ENCODE measurements at regions of chr12 and their contacts with region 1.

Region 1: DNA sequence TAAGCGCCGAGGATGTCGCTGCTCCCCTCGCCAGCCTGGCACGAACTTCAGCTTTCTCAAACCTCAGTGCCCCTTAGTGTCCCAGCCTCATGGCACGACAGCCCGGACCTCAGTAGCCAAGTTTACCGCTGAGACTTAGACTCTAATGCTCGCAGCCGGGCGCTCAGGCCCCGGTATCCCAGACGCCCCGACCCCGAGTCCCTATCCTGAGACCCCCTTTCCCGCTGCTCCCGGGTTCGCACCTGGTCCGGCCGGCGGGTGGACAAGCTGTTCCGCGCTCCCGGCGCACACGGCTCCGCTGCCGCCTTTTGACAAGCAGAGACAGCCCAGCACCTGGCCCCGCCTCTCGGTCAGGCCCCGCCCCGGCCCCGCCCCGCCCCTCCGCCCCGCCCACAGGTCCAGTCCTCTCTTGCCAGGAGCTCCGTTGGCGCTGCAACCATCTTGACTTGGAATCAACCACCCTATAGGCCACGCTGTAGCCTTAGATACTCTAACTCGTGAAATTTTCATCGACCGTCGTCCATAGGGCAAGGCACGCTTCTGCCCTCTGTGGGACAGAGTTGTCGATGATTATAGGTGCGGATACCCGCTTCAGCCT is at the start of gene VDR:
- DNase-seq: peak; percentile 92
- CTCF ChIP-seq: no peak

Region 2: GRCh38 chr12:47870175-47870781 is 34.5 kb before region 1 on chr12:
- CTCF ChIA-PET with region 1: interaction called, 13 read pairs
- POLR2A ChIA-PET with region 1: interaction called, 8 read pairs
- DNase-seq: no peak
- CTCF ChIP-seq: peak; percentile 46

Region 3: GRCh38 chr12:47882781-47883546 is 21.8 kb before region 1 on chr12:
- CTCF ChIA-PET with region 1: interaction called, 32 read pairs
- POLR2A ChIA-PET with region 1: interaction called, 5 read pairs
- DNase-seq: peak; percentile 75
- CTCF ChIP-seq: no peak

Region 4: GRCh38 chr12:47891356-47891755 is 13.5 kb before region 1 on chr12:
- CTCF ChIA-PET with region 1: interaction called, 32 read pairs
- POLR2A ChIA-PET with region 1: no interaction called
- DNase-seq: no peak
- CTCF ChIP-seq: no peak